ENCODE measurements at regions of chr6 and their contacts with region 1.

Region 1: DNA sequence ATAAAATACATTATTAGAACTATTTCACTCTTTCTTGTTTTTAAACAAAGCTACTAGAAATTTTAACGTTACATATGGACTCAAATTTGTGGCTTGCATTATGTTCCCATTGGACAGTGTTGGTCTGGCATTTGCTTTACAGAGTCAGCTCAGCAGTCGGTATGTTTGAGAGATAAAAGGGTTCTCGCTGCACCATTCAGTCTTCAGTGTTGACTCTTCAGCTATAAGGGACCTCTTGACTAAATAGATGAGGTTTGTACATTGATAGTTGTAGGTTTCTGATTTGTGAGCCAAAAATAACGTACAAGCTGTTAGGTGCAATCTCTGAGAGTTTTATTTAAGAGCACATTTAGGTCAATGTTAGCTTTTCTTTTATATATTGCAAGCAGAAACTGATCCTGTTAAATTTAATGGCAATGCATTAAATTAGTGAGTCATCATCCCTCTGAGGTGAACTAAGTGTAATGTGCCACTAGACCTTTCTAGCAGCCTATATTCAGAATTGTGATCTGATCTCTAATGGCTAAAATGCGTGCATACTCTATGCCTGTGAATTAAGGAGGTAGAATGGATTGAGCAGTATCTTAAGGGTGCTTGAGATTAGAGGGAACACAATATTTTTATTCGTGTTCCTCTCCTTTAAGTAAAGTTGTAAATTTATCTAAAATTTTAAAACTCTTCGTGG is 485.6 kb upstream of the SYNCRIP start:
- DNase-seq: no peak
- H3K4me3 ChIP-seq: no peak overlapping the region
- H3K27ac ChIP-seq: no peak overlapping the region
- H3K4me1 ChIP-seq: no peaks in the 10 kb centered on the region
- H3K27me3 ChIP-seq: no peaks in the 10 kb centered on the region

Region 2: GRCh38 chr6:85966828-85967227 is 161.4 kb before region 1 on chr6:
- CTCF ChIA-PET with region 1: no interaction called
- POLR2A ChIA-PET with region 1: no interaction called
- DNase-seq: no peak
- H3K4me3 ChIP-seq: no peak overlapping the region
- H3K27ac ChIP-seq: no peak overlapping the region
- H3K4me1 ChIP-seq: no peaks in the 10 kb centered on the region
- H3K27me3 ChIP-seq: no peaks in the 10 kb centered on the region

Region 3: GRCh38 chr6:86118271-86118670 is 10.0 kb before region 1 on chr6:
- CTCF ChIA-PET with region 1: interaction called, 11 read pairs
- POLR2A ChIA-PET with region 1: no interaction called
- DNase-seq: no peak
- H3K4me3 ChIP-seq: no peak overlapping the region
- H3K27ac ChIP-seq: no peak overlapping the region
- H3K4me1 ChIP-seq: no peaks in the 10 kb centered on the region
- H3K27me3 ChIP-seq: no peaks in the 10 kb centered on the region